ENCODE measurements at regions of chr16 and their contacts with region 1.

Region 1: DNA sequence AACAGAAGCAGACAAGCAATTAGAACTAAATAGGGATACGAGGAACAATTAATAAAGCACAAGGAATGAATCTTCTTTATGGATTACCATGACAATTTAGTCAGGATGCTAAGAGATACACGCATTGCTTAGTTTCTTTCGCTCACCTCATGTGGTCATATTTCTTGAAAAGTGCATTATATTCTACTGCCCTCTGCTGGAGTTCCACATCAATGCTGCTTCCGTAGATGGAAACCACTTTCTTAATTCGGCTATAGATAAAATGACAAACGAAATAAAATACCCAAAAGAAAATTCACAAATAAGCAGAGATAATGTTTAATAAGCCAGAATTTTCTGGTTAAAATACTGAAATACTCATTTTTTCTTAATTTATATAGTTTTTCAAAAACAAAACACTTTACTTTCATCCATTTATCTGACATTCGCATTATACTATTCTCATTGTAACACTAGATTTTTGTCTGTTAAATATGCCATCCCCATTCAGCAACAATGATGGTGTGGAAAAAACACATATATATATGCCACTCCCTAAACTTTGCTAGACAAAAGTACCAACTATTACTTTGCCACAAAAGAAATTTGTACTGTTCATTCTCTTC is 22.0 kb upstream of the PHLPP2 start:
- DNase-seq: no peak
- ATAC-seq: peak in 2 of 4 donors; percentile 36 to 54
- H3K4me3 ChIP-seq: no peak overlapping the region
- H3K27ac ChIP-seq: no peak overlapping the region
- H3K4me1 ChIP-seq: peaks cover 9% of the 10 kb centered on the region
- H3K27me3 ChIP-seq: no peaks in the 10 kb centered on the region
- CTCF ChIP-seq: peak; percentile 67

Region 2: DNA sequence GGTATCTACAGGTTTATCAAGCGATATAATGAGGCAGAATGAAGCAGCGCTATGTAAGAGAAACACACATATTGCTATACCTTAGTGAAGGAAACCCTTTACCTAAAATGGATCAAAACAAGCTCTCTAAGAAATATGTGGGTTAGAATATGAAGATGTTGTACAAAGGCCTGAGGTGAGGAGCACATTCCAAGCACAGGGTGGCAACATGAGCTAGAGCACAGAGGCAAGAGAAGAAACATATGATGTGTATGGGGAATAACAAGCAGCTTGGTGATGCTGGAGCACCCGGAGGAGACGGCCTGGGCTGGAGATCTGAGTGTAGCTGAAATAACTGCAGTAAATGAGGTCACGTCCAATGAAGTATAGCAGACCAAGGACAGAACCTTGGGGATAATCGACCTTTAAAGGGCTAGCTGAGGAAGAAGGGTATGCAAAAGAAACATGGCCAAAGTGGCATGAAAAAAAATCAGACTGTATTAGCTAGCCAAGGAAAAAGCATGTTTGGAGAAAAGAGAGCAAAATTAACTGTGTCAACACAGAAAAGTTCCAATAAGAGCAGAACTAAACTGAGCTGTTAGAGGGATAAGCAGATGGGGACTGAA is 76.5 kb before region 1 on chr16:
- intact Hi-C with region 1: loop called in 1 of 2 experiments (anchors 2 kb)
- DNase-seq: no peak
- ATAC-seq: no peak
- H3K4me3 ChIP-seq: no peak overlapping the region
- H3K27ac ChIP-seq: no peak overlapping the region
- H3K4me1 ChIP-seq: no peaks in the 10 kb centered on the region
- H3K27me3 ChIP-seq: no peaks in the 10 kb centered on the region
- CTCF ChIP-seq: no peak